ENCODE measurements at regions of chr19 and their contacts with region 1.

Region 1: GRCh38 chr19:11535792-11536595 is 2.7 kb upstream of the CNN1 start:
- DNase-seq: peak; percentile 79
- H3K4me3 Mint-ChIP-seq: peak overlapping the region; percentile 50
- H3K27ac Mint-ChIP-seq: peak overlapping the region; percentile 26
- H3K4me1 Mint-ChIP-seq: peaks cover 18% of the 10 kb centered on the region
- H3K27me3 Mint-ChIP-seq: peaks cover 23% of the 10 kb centered on the region

Region 2: DNA sequence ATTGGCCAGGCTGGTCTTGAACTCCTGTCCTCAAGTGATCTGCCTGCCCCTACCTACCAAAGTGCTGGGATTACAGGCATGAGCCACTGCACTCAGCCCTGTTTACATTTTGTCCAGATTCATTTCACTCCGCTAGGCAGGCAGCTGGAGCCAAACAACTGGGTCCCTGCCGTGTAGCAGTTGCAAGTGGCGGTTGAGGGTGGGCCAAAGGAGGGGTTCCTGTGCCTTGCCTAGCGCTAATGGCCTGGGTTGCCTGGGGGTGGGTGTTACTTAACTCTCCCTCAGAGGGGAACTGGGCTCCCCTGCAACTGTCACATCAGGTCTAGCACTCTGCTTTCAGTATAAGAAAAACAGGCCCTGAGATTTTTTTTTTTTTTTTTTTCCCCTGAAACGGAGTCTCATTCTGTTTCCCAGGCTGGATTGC is 34.1 kb after region 1 on chr19:
- intact Hi-C with region 1: no loop called
- DNase-seq: no peak
- H3K4me3 Mint-ChIP-seq: no peak overlapping the region
- H3K27ac Mint-ChIP-seq: no peak overlapping the region
- H3K4me1 Mint-ChIP-seq: peaks cover 12% of the 10 kb centered on the region
- H3K27me3 Mint-ChIP-seq: no peaks in the 10 kb centered on the region

Region 3: DNA sequence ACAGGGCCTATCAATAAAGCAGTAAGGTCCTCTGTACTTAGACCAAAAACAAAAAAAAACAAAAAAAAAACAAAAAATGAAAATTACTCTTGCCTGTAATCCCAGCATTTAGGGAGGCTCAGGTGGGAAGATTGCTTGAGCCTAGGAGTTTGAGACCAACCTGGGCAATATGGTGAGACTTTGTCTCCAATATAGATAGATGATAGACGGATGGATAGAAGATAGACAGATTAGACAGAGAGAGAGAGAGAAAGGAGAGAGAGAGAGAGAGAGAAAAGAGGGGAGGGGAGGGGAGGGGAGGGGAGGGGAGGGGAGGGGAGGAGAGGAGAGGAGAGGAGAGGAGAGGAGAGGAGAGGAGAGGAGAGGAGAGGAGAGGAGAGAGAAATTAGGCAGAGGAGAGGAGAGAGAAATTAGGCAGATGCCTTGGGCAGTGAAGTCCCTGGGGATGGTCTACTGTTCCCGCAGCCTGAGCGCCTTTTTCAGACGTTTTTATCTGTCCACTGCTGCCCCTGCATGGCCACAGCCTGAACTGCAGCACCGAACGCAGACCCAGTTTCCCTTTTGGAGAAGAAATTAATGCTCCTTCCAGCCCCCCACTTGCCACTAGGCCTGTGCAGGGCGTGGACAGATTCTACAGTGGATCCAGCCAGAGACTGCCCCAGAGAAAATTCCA is 51.4 kb after region 1 on chr19:
- intact Hi-C with region 1: loop called (anchors 1 kb)
- DNase-seq: peak; percentile 75
- H3K4me3 Mint-ChIP-seq: no peak overlapping the region
- H3K27ac Mint-ChIP-seq: peak overlapping the region; percentile 63
- H3K4me1 Mint-ChIP-seq: peaks cover 9% of the 10 kb centered on the region
- H3K27me3 Mint-ChIP-seq: no peaks in the 10 kb centered on the region

Measured in activated T-helper 2 cell treated with anti-CD3 and anti-CD28 coated beads, Interferon-gamma antibody, Interleukin-2, Interleukin-4, amounts not matched to agents 10 μg/mL and 5 μg/mL and 100 μg/mL, durations not matched to agents 14 hours and 24 hours and 36 hours (primary cell).